Activated CD4-positive, alpha-beta memory T cell treated with anti-CD3 and anti-CD28 coated beads for 36 hours (primary cell): ENCODE measurements at regions of chr3 and their contacts with region 1.

Region 1: GRCh38 chr3:52339612-52340011 is 23.5 kb downstream of the DNAH1 start:
- DNase-seq: peak; percentile 44
- H3K4me3 Mint-ChIP-seq: no peak overlapping the region
- H3K27ac Mint-ChIP-seq: no peak overlapping the region
- H3K4me1 Mint-ChIP-seq: peaks cover 6% of the 10 kb centered on the region
- H3K27me3 Mint-ChIP-seq: no peaks in the 10 kb centered on the region

Region 2: DNA sequence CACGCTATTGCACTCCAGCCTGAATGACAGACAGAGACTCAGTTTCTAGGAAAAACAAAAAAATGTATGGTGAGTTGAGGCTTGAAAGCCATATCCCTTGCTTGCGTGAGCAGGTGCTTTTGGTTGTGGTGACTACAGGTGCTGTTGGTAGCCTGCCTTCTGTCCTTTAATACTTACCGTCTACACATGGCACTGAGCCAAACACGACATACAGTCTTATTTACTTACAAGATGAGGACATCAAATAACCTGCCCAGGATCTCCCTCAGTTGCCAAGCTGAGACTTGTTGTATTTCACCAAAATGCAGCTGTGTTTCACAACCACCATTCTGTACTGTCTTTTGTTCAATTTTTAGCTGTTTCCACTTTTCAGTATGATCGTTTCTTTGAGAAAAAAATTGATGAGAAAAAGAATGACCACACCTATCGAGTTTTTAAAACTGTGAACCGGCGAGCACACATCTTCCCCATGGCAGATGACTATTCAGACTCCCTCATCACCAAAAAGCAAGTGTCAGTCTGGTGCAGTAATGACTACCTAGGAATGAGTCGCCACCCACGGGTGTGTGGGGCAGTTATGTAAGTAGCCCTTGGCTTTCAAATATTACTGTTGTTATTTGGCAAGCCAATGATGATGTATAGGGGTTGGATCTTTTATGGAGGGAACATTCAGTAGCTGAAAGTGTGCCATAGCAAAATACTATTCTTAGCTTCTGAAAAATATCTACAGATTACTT is 135.1 kb before region 1 on chr3:
- CTCF ChIA-PET with region 1: interaction called, 12 read pairs
- POLR2A ChIA-PET with region 1: no interaction called
- intact Hi-C with region 1: no loop called
- DNase-seq: peak; percentile 62
- H3K4me3 Mint-ChIP-seq: no peak overlapping the region
- H3K27ac Mint-ChIP-seq: peak overlapping the region; percentile 46
- H3K4me1 Mint-ChIP-seq: peaks cover 46% of the 10 kb centered on the region
- H3K27me3 Mint-ChIP-seq: no peaks in the 10 kb centered on the region

Region 3: GRCh38 chr3:52231502-52232293 is 107.9 kb before region 1 on chr3:
- CTCF ChIA-PET with region 1: interaction called, 271 read pairs
- POLR2A ChIA-PET with region 1: interaction called, 3 read pairs
- intact Hi-C with region 1: loop called (anchors 1 kb)
- DNase-seq: peak; percentile 90
- H3K4me3 Mint-ChIP-seq: no peak overlapping the region
- H3K27ac Mint-ChIP-seq: peak overlapping the region; percentile 73
- H3K4me1 Mint-ChIP-seq: peaks cover 37% of the 10 kb centered on the region
- H3K27me3 Mint-ChIP-seq: no peaks in the 10 kb centered on the region

Region 4: DNA sequence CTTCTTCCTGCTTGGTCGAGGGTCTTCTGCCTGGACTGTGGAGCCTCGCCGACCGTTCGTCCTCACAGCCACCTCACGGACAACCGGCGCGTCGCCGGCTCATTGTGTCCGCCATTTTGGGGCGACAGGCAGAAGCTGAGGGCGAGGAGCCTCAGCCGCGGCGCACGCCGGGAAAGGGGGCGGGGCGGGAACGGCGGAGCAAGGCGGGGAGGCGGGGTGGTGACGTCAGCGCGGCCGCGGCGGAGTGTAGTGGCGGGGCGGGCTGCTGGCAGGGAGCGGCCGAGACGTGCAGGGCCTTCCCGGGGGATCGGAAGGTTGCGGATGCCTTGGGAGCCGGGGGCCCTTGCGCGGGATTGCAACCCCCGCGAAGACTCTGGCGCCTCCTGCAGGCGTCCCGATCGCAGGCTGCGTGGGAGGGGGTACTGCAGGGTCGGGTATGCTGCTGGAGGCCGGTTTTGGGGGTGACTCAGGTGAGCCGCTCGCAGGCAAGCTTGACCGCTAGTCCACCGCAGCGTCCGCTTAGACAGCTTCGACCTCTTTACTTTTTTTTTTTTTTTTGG is 61.0 kb before region 1 on chr3 and contains the start of gene WDR82:
- CTCF ChIA-PET with region 1: interaction called, 25 read pairs
- POLR2A ChIA-PET with region 1: interaction called, 3 read pairs
- intact Hi-C with region 1: no loop called
- DNase-seq: peak; percentile 99
- H3K4me3 Mint-ChIP-seq: peak within 1 kb of the TSS; percentile 92
- H3K27ac Mint-ChIP-seq: peak within 1 kb of the TSS; percentile 95
- H3K4me1 Mint-ChIP-seq: peaks cover 54% of the 10 kb centered on the region
- H3K27me3 Mint-ChIP-seq: no peaks in the 10 kb centered on the region
- total RNA-seq, gene WDR82: 110 to 111 TPM

Region 5: GRCh38 chr3:52317208-52318000 is 22.2 kb before region 1 on chr3:
- CTCF ChIA-PET with region 1: interaction called, 13 read pairs
- POLR2A ChIA-PET with region 1: no interaction called
- intact Hi-C with region 1: no loop called
- DNase-seq: peak; percentile 79
- H3K4me3 Mint-ChIP-seq: peak overlapping the region; percentile 41
- H3K27ac Mint-ChIP-seq: peak overlapping the region; percentile 56
- H3K4me1 Mint-ChIP-seq: peaks cover 32% of the 10 kb centered on the region
- H3K27me3 Mint-ChIP-seq: no peaks in the 10 kb centered on the region

Region 6: GRCh38 chr3:52380023-52380422 is 40.4 kb after region 1 on chr3:
- CTCF ChIA-PET with region 1: interaction called, 10 read pairs
- POLR2A ChIA-PET with region 1: no interaction called
- intact Hi-C with region 1: no loop called
- DNase-seq: no peak
- H3K4me3 Mint-ChIP-seq: no peak overlapping the region
- H3K27ac Mint-ChIP-seq: no peak overlapping the region
- H3K4me1 Mint-ChIP-seq: no peaks in the 10 kb centered on the region
- H3K27me3 Mint-ChIP-seq: no peaks in the 10 kb centered on the region